ENCODE measurements at regions of chr2 and their contacts with region 1.

Region 1: DNA sequence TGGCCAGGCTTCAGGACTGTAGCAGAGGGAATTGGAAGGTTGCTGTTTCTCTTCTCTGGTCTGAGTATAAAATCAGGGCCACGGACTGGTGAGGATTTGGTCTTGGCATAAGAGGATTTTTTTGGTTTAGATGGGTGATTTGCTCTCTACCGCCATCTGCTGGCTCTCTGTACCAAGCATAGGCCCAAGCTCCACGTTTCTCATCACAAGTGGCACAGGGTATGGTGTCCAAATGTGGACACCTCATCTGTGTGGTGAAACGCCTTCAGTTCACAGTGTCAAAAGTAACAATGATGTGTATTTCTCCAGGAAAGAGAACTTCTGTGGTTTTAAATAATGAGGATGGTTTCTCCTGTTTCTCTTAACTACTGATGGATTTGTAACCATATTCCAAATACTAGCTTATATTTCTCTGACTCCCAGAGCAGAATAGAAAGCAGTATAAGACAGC is 115.1 kb downstream of the EML6 start:
- DNase-seq: peak; percentile 85
- ATAC-seq: peak; percentile 68
- H3K4me3 ChIP-seq: no peak overlapping the region
- H3K27ac ChIP-seq: no peak overlapping the region
- H3K4me1 ChIP-seq: peaks cover 4% of the 10 kb centered on the region; the same call in 1 of the 2 replicates
- H3K27me3 ChIP-seq: no peaks in the 10 kb centered on the region
- CTCF ChIP-seq: peak; percentile 94

Region 2: DNA sequence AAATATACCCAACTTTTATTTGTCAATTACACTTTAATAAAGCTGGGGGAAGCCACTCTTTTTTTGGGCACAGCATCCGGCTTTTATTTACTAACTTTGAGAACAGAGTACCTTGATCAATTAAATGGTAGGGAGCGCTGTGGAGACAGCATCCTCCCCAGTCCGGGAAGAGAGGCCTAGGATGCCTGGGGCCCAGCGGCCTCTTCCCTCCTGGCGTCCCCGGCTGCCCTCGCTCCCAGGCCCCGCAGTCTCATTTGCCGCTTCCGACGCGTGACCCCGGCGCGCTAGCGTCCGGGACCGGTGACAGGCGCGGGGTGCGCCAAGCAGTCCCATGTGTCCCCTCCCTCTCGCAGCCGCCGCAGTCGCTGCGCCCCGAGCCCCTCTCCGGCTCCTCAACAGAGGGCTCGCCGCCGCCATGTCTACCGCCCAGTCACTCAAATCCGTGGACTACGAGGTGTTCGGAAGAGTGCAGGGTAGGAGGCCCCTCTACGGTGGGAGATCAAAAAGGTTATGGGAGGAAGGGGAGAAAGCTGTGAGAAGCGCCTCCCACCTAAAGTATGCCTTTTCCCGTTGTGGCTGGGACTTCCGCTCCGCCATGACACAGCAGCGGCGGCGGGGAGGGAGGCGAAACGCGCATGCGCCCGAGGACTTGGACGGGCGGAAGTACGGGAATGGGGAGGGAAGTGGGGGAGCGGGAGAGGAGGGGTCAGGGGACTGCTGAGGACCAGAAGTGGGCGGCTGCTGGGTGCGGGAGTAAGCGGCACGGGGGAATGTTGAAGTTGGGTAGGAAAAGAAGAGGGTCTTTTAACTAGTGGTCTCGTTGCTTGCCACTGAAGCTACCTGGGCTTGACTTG is 723.1 kb before region 1 on chr2 and contains the start of gene ACYP2:
- CTCF ChIA-PET with region 1: no interaction called
- POLR2A ChIA-PET with region 1: no interaction called
- intact Hi-C with region 1: loop called (anchors 10 kb)
- DNase-seq: peak; percentile 93
- ATAC-seq: peak; percentile 90
- H3K4me3 ChIP-seq: peak within 1 kb of the TSS; percentile 82
- H3K27ac ChIP-seq: peak within 1 kb of the TSS; percentile 92
- H3K4me1 ChIP-seq: peaks cover 8% of the 10 kb centered on the region; the same call in 1 of the 2 replicates
- H3K27me3 ChIP-seq: no peaks in the 10 kb centered on the region
- CTCF ChIP-seq: peak; percentile 42; the same call in 1 of the 2 replicates
- total RNA-seq, gene ACYP2: 2.9 and 8.3 TPM in 2 replicates

Region 3: DNA sequence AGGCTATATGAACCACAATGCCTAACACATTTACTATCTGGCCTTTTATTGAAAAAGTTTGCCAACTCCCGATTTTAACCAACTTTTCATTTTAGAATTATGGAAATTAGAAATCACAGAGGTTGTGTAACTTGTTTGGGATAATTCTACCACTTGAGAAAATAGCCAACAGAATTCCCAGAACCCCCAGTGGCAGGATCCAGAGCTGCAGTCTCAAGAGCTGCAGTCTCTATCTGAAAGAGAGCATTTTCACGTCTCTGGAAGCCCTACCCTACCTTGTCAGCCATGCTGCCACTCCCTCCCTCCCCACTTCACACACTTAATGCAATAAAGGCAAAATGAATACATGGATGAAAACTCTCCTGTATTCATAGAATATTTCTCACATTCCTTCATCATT is 559.2 kb before region 1 on chr2:
- CTCF ChIA-PET with region 1: no interaction called
- POLR2A ChIA-PET with region 1: no interaction called
- intact Hi-C with region 1: no loop called
- DNase-seq: peak; percentile 18
- ATAC-seq: peak; percentile 37; the same call in 1 of the 2 replicates
- H3K4me3 ChIP-seq: no peak overlapping the region
- H3K27ac ChIP-seq: no peak overlapping the region
- H3K4me1 ChIP-seq: no peaks in the 10 kb centered on the region
- H3K27me3 ChIP-seq: 0 out of 2 replicates have a peak, but pooled peaks cover 9% of the 10 kb centered on the region
- CTCF ChIP-seq: peak; percentile 46

Region 4: DNA sequence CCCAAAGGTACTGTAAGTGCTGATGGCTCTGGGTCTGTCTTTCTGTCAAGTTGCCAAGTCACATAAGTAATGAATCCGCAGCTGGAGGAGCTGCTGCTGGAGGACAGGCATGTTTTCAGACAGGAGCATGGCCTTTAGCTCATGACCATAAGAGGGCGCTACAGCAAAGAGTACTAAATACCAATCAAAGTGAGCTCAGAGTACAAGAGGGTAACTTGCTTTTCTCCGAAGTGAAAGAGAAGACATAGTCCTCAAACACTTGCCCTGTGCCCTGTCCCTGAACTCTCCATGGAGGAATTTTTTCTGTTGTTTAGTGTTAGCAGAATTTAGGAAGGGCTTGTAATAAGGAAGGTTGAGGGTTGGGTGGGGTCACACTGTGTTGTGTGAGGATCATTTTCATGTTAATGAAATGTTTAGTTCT is 173.2 kb before region 1 on chr2:
- CTCF ChIA-PET with region 1: interaction called, 4 read pairs
- POLR2A ChIA-PET with region 1: no interaction called
- intact Hi-C with region 1: loop called (anchors 5 kb)
- DNase-seq: peak; percentile 61
- ATAC-seq: peak; percentile 63; the same call in 1 of the 2 replicates
- H3K4me3 ChIP-seq: no peak overlapping the region
- H3K27ac ChIP-seq: peak overlapping the region; percentile 26
- H3K4me1 ChIP-seq: peaks cover 15% of the 10 kb centered on the region
- H3K27me3 ChIP-seq: no peaks in the 10 kb centered on the region
- CTCF ChIP-seq: peak; percentile 83

Region 5: DNA sequence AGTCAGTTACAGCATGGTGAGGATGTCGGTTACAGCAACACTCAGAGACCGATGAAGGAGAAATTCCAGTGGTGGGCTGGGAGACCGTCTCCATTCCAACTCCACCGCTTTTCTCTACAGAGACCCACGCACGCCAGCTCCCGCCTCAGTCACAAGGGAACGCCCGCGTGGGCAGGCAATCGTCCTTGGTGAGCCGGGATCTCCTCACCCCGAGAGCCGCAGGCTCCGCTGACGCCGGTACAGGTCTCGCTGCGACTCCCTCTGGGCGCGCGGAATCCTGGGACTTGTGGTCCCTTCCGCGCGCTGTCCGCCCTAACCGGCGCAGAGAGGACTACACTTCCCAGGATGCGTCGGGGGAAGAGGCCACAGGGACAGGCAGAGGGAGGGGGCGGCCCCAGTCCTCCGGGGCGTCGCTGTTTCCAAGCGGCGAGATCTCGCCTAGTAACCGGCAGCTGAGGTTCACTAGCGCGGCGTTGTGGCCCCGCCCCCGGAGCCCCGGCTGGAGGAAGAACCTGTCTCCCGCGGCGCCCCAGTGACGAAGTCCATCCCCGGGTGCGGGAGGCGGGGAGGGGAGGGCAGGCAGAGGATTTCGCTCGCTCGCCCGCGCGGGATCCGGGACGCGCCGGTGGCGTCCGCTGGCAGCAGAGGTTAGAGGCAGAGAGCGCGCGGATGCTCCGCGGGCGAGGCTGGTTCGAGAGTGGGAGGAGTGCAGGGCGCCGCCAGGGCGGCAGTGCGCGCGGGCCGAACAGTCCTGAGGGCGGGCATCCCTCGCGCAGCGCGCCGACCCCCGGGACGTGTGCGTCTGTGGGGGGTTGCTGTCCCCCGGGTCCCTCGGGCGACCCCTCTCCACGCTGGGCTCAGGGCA is 115.2 kb before region 1 on chr2 and contains the start of gene EML6:
- CTCF ChIA-PET with region 1: interaction called, 4 read pairs
- POLR2A ChIA-PET with region 1: no interaction called
- intact Hi-C with region 1: loop called (anchors 1 kb)
- DNase-seq: peak; percentile 99
- ATAC-seq: peak; percentile 95
- H3K4me3 ChIP-seq: peak within 1 kb of the TSS; percentile 83
- H3K27ac ChIP-seq: peak within 1 kb of the TSS; percentile 46
- H3K4me1 ChIP-seq: peaks cover 26% of the 10 kb centered on the region
- H3K27me3 ChIP-seq: no peaks in the 10 kb centered on the region
- CTCF ChIP-seq: peak; percentile 38
- total RNA-seq, gene EML6: 5.3 and 15.7 TPM in 2 replicates

Region 6: GRCh38 chr2:54728669-54729120 is 109.9 kb before region 1 on chr2:
- CTCF ChIA-PET with region 1: interaction called, 4 read pairs
- POLR2A ChIA-PET with region 1: no interaction called
- intact Hi-C with region 1: loop called (anchors 1 kb)
- DNase-seq: peak; percentile 95
- ATAC-seq: peak; percentile 83
- H3K4me3 ChIP-seq: no peak overlapping the region; the same call in 1 of the 2 replicates
- H3K27ac ChIP-seq: peak overlapping the region; percentile 69
- H3K4me1 ChIP-seq: peaks cover 28% of the 10 kb centered on the region
- H3K27me3 ChIP-seq: no peaks in the 10 kb centered on the region
- CTCF ChIP-seq: peak; percentile 63

Region 7: DNA sequence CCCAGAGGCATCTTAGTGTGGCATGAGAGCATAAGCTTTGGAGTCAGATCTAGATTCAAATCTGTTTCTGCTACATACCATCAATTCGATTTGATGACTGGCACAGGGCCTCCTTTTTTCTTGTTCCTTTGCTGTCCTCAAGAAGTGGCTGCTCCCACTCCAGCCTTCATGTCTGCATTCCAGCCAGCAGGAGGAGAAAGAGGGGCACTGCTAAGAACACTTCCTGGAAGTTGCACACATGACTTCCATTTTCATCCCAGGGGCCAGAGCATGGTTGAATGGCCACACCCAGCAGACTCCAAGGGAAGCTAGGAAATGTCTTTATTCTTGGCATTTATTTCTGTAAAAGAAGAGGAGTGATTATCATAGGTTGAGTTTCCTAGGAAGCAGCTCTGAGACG is 64.8 kb before region 1 on chr2:
- CTCF ChIA-PET with region 1: no interaction called
- POLR2A ChIA-PET with region 1: no interaction called
- intact Hi-C with region 1: loop called (anchors 2 kb)
- DNase-seq: peak; percentile 40
- ATAC-seq: no peak
- H3K4me3 ChIP-seq: no peak overlapping the region
- H3K27ac ChIP-seq: peak overlapping the region; percentile 92; the same call in 1 of the 2 replicates
- H3K4me1 ChIP-seq: peaks cover 31% of the 10 kb centered on the region
- H3K27me3 ChIP-seq: no peaks in the 10 kb centered on the region
- CTCF ChIP-seq: peak; percentile 52